IMR-90 (cell line): ENCODE measurements at regions of chr10 and their contacts with region 1.

Region 1: DNA sequence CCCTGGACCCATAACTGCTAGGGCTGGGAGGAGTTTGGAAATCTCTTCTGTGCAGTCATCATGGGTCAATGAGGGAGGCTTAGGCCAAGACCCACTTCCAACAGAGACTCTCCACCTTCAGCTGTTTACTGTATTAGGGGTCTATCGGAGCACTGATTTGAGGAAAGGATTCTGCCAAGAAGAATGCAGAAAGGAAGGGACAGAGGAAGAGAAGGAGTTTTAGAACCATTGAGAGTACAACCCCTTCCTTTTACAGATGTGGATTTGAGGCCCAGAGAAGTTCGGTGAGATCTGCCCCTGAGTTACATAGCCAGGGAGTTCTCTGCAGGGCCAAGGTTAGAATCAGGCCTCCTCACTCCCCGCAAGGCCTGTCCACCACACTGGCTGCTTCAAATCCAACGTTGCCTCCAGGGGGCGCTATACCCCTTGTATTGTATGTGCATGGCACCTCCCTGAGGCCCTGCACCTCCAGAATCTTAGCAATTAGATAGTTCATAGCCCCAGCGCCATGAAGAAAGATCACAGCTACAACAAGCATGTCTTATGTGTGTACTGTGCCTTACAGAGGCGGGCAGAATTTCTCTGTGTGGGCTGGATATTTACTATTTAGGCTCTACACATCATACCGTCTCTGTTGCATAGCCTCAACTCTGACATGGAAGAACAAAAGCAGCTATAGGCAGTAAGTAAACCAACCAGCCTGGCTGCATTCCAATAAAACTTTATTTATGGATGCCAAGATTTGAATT is 246.8 kb downstream of the SKIDA1 start:
- DNase-seq: peak; percentile 90
- ATAC-seq: peak; percentile 99
- H3K4me3 ChIP-seq: no peak overlapping the region
- H3K27ac ChIP-seq: no peak overlapping the region
- H3K4me1 ChIP-seq: peaks cover 2% of the 10 kb centered on the region; the same call in 1 of the 2 replicates
- H3K27me3 ChIP-seq: no peaks in the 10 kb centered on the region; the same call in 1 of the 2 replicates
- CTCF ChIP-seq: peak; percentile 89
- POLR2A ChIP-seq: no peak
- RAD21 ChIP-seq: peak; percentile 97

Region 2: DNA sequence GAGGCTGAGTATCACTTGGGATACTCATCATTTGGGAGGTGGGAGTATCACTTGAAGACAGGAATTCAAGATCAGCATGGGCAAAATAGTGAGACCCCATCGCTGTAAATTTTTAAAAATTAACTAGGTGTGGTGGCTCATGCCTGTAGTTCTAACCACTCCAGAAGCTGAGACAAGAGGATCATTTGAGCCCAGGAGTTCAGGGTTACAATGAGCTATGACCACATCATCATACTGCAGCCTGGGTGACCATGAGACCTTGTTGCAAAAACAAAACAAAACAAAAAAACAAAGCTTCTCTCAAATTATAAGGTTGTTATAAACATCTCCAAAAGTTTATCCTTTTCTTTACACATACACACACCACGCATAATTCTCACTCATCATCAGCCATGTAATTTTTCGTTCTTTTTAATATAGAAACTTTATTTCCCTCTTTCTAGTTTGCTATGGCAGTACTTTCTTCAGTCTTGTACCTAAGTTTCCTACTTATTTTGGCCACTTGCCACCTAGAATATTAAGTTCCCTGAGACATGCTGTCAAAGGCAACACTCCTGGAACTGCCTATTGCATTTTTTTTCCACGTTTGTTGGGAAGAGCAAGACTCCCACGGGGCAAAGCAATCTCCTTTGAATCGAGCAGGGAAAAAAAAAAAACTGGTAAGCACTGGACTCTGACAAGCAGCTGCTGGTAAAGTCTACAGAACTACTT is 209.7 kb after region 1 on chr10:
- CTCF ChIA-PET with region 1: interaction called, 6 read pairs
- POLR2A ChIA-PET with region 1: interaction called, 6 read pairs
- dilution Hi-C with region 1: no loop called
- in situ Hi-C with region 1: loop called (anchors 5 kb)
- intact Hi-C with region 1: loop called (anchors 1 kb)
- DNase-seq: no peak
- ATAC-seq: no peak
- H3K4me3 ChIP-seq: no peak overlapping the region
- H3K27ac ChIP-seq: no peak overlapping the region
- H3K4me1 ChIP-seq: no peaks in the 10 kb centered on the region
- H3K27me3 ChIP-seq: no peaks in the 10 kb centered on the region
- CTCF ChIP-seq: no peak
- POLR2A ChIP-seq: no peak
- RAD21 ChIP-seq: no peak

Region 3: DNA sequence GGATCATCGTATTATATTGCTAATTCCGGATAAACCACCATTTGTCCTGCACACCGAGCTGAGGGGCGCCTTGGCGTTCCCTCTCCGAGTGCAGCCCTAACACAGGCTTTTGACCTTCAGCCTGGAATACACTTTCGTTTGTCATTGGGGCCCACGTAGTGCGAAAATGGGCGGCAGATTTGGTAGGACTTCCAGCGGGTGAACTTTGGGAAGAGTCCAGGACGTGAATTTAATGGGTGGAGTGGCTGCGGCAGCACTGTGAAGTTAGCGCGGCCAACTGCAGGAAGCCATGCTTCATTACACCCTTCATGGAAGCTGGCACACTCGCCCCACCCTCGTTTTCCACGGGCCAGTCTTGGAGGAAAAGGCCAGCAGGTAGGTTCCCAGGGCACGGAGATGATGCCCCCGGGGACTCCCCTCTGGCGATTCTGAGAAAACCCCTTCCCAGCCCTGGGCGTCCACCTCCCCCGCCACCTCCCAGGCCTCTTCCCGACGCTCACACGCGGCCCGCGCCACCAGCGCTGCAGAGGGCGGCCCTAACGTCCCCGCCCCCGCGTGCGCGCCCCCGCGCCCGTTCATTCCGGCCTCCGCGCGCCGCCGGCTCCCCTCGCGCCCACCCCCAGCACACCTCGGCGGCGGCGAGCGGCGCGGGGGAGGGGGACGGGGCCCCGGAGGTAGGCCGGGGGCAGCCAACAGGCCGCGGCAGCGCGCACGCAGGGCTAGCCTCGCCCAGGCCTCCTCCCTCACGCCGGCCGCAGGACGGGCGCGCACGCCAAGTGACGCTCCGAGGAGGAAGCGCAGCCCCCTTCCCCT is 255.0 kb after region 1 on chr10 and contains the start of gene MLLT10:
- CTCF ChIA-PET with region 1: interaction called, 4 read pairs
- POLR2A ChIA-PET with region 1: no interaction called
- dilution Hi-C with region 1: no loop called
- in situ Hi-C with region 1: no loop called
- intact Hi-C with region 1: loop called (anchors 2 kb)
- DNase-seq: peak; percentile 94
- ATAC-seq: peak; percentile 94
- H3K4me3 ChIP-seq: peak within 1 kb of the TSS; percentile 89
- H3K27ac ChIP-seq: peak within 1 kb of the TSS; percentile 97
- H3K4me1 ChIP-seq: 0 out of 2 replicates have a peak, but pooled peaks cover 2% of the 10 kb centered on the region
- H3K27me3 ChIP-seq: no peaks in the 10 kb centered on the region
- CTCF ChIP-seq: peak; percentile 28
- POLR2A ChIP-seq: peak; percentile 59; the same call in 1 of the 2 replicates
- RAD21 ChIP-seq: no peak; the same call in 1 of the 2 replicates
- total RNA-seq, gene MLLT10: 29.0 and 31.9 TPM in 2 replicates

Region 4: GRCh38 chr10:21953585-21954057 is 675.0 kb after region 1 on chr10:
- CTCF ChIA-PET with region 1: no interaction called
- POLR2A ChIA-PET with region 1: no interaction called
- dilution Hi-C with region 1: no loop called
- in situ Hi-C with region 1: loop called (anchors 10 kb)
- intact Hi-C with region 1: loop called (anchors 1 kb)
- DNase-seq: peak; percentile 61
- ATAC-seq: peak; percentile 14; the same call in 1 of the 2 replicates
- H3K4me3 ChIP-seq: no peak overlapping the region
- H3K27ac ChIP-seq: no peak overlapping the region
- H3K4me1 ChIP-seq: no peaks in the 10 kb centered on the region
- H3K27me3 ChIP-seq: no peaks in the 10 kb centered on the region
- CTCF ChIP-seq: peak; percentile 53
- POLR2A ChIP-seq: no peak
- RAD21 ChIP-seq: peak; percentile 60